ENCODE measurements at regions of chr3 and their contacts with region 1.

Region 1: GRCh38 chr3:85881833-85882393 is 923.1 kb downstream of the CADM2 start:
- DNase-seq: no peak
- H3K4me3 ChIP-seq: no peak overlapping the region
- H3K27ac ChIP-seq: no peak overlapping the region
- H3K4me1 ChIP-seq: no peaks in the 10 kb centered on the region
- H3K27me3 ChIP-seq: no peaks in the 10 kb centered on the region
- CTCF ChIP-seq: no peak

Region 2: DNA sequence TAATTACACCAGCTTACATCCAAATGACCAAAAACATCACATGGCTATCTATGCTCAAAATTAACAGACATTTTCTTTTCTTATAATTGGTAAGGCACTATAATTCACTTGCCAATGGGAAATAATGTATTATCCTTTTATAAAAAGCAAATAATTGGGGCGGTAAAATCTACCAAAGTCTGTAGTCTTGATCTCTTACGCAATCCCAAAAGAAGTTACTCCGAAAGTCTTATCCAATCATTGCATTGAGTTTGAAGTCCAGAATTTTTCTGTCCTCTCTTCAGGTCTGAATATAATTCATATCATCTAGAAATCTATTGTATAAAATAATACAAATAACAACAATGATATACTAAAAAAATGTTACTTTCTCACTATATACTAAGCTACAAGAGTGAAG is 1196.4 kb before region 1 on chr3:
- CTCF ChIA-PET with region 1: interaction called, 10 read pairs
- POLR2A ChIA-PET with region 1: no interaction called
- intact Hi-C with region 1: no loop called
- DNase-seq: no peak
- H3K4me3 ChIP-seq: no peak overlapping the region
- H3K27ac ChIP-seq: no peak overlapping the region
- H3K4me1 ChIP-seq: no peaks in the 10 kb centered on the region
- H3K27me3 ChIP-seq: no peaks in the 10 kb centered on the region
- CTCF ChIP-seq: no peak